Endothelial cell of umbilical vein (primary cell): ENCODE measurements at regions of chr17 and their contacts with region 1.

Region 1: DNA sequence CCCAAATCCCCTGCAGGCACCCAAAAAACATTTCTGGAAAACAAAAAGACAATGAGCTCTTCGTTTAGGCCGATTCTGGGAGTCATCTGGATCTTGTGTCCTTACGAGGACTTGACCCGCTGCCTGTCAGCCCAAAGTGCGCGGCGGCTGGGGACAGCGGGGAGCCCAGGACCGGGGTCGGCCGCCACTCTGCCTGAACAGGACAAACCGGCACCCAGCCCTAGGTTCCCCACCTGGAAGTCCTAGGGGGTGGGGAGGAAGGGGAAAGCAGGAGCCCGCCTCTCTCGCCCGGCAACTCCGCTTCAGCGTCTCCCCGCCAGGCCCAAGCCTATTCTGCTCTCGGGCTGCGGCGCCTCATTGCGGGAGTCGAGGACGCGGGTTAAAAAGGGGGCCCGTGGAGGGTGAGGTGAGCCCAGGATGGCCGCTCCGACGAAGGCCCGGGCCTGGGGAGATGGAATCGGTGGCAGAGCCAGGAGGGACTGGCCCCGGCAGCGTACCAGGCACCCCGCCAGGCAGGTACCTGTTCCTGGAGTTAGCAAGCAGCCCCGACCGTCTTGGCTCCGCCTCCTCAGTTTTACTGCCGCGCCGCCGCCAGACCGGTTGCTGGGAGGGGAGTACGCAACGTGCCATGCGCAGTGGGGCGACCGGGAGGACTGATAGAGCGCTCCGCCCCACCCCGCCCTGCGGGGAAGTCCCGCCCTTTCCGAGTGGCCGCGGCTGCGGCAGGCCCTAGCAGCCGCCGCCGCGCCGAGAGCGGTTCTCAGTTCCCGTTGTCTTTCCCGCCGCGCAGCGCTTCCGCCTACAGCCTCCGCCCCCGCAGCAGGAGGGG is at the start of gene STRADA:
- DNase-seq: peak; percentile 99
- H3K4me3 ChIP-seq: peak within 1 kb of the TSS; percentile 72 to 98 (median 93)
- H3K27ac ChIP-seq: peak within 1 kb of the TSS; percentile 80
- H3K4me1 ChIP-seq: peaks cover 12% of the 10 kb centered on the region
- H3K27me3 ChIP-seq: no peaks in the 10 kb centered on the region
- CTCF ChIP-seq: no peak
- POLR2A ChIP-seq: peak; percentile 88
- total RNA-seq, gene STRADA: 47.0 and 49.6 TPM in 2 replicates

Region 2: GRCh38 chr17:63773381-63774140 is 32.1 kb after region 1 on chr17 and contains the start of gene CCDC47:
- CTCF ChIA-PET with region 1: interaction called, 3 read pairs
- POLR2A ChIA-PET with region 1: interaction called, 5 read pairs
- dilution Hi-C with region 1: no loop called
- intact Hi-C with region 1: loop called (anchors 1 kb)
- DNase-seq: peak; percentile 99
- H3K4me3 ChIP-seq: peak within 1 kb of the TSS; percentile 77 to 94 (median 94)
- H3K27ac ChIP-seq: peak within 1 kb of the TSS; percentile 78
- H3K4me1 ChIP-seq: peaks cover 15% of the 10 kb centered on the region
- H3K27me3 ChIP-seq: no peaks in the 10 kb centered on the region
- CTCF ChIP-seq: no peak
- POLR2A ChIP-seq: peak; percentile 89
- total RNA-seq, gene CCDC47: 73.9 and 76.5 TPM in 2 replicates